Ascending aorta (tissue), 2 donors: ENCODE measurements at regions of chr9 and their contacts with region 1.

Region 1: GRCh38 chr9:38214432-38214831 is 145.4 kb upstream of the SHB start:
- DNase-seq: no peak
- H3K4me3 ChIP-seq: no peak overlapping the region
- H3K27ac ChIP-seq: no peak overlapping the region
- H3K4me1 ChIP-seq: no peaks in the 10 kb centered on the region
- H3K27me3 ChIP-seq: no peaks in the 10 kb centered on the region
- CTCF ChIP-seq: no peak

Region 2: DNA sequence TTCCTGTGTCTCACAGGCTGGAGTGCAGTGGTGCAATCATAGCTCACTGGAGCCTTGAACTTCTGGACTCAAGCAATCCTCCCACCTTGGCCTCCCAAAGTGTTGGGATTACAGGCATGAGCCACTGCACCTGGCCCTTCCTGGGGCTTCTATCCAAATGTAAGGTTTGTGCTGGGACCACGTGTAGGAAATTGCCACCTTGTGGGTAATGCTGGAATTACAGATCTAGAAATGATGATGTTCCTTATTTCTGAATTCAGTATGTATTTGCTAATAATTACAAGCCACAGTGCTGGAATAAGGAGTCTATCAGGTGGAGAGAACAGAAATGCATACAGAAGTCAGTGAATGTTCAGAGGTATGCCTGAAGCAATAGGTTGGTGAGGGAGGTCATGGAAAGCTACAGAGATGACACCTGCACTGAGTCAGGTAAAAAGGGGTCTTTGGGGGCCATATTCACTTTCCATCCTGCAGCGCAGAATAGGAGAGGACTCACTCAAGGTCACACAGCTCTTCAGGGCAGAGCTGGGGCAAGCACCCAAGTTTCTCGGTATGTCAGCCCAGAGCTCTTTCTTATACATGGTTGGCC is 218.6 kb after region 1 on chr9:
- intact Hi-C with region 1: loop called (anchors 10 kb)
- DNase-seq: peak in 1 of 2 donors; percentile 46
- H3K4me3 ChIP-seq: no peak overlapping the region
- H3K27ac ChIP-seq: no peak overlapping the region
- H3K4me1 ChIP-seq: no peaks in the 10 kb centered on the region
- H3K27me3 ChIP-seq: no peaks in the 10 kb centered on the region
- CTCF ChIP-seq: peak; percentile 53 to 75 (median 68)